OCI-LY7 (cell line): ENCODE measurements at regions of chr4 and their contacts with region 1.

Region 1: GRCh38 chr4:77052352-77052751 is 23.4 kb downstream of the CCNI start:
- DNase-seq: peak; percentile 67
- H3K4me3 ChIP-seq: no peak overlapping the region
- H3K27ac ChIP-seq: no peak overlapping the region
- H3K4me1 ChIP-seq: no peaks in the 10 kb centered on the region
- CTCF ChIP-seq: peak; percentile 90

Region 2: GRCh38 chr4:76515975-76516843 is 536.1 kb before region 1 on chr4:
- CTCF ChIA-PET with region 1: no interaction called
- POLR2A ChIA-PET with region 1: no interaction called
- intact Hi-C with region 1: no loop called
- DNase-seq: no peak
- H3K4me3 ChIP-seq: no peak overlapping the region
- H3K27ac ChIP-seq: no peak overlapping the region
- H3K4me1 ChIP-seq: no peaks in the 10 kb centered on the region
- CTCF ChIP-seq: no peak

Region 3: DNA sequence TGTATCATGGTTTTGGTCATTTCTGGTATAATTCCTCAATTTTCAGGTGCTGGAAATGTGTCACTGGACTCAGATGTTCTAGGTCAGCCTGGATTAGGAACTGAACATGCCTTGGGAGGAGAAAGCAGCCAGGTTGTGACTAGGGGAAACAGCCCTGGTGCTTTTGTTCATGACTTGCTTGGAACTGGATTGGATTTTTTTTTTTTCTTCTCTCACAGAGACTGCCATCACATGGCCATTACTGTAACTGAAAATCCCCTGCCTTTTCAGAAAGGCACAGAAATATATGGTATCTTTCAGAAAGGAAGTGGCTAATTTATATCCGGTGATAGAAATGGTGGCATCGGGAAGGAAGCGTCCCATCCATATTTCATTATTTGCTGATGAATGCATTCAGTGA is 68.2 kb before region 1 on chr4:
- CTCF ChIA-PET with region 1: no interaction called
- POLR2A ChIA-PET with region 1: no interaction called
- intact Hi-C with region 1: no loop called
- DNase-seq: peak; percentile 9
- H3K4me3 ChIP-seq: no peak overlapping the region
- H3K27ac ChIP-seq: no peak overlapping the region
- H3K4me1 ChIP-seq: peaks cover 5% of the 10 kb centered on the region
- CTCF ChIP-seq: peak; percentile 59

Region 4: DNA sequence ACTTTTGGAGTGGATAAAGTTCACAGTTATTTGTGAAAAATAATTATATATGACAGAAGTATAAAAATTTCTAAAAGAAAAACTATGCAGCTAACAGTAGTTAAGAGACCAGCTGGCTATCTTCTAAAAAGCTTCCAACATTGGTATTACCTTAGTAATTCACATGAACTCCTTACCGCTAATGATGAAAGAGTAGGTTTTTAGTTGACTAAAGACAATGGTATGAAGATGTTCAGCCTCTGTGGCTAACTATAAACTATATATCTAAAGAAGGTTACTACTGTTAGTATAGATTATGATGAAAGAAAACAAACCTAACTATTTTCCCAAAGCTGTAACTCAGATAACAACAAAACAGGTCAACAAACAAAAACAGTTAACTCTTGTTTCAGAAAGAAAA is 13.0 kb after region 1 on chr4:
- CTCF ChIA-PET with region 1: no interaction called
- POLR2A ChIA-PET with region 1: interaction called, 11 read pairs
- intact Hi-C with region 1: no loop called
- DNase-seq: no peak
- H3K4me3 ChIP-seq: no peak overlapping the region
- H3K27ac ChIP-seq: no peak overlapping the region
- H3K4me1 ChIP-seq: peaks cover 6% of the 10 kb centered on the region
- CTCF ChIP-seq: no peak